K562 (cell line): ENCODE measurements at regions of chr5 and their contacts with region 1.

Region 1: GRCh38 chr5:10317825-10318682 is 10.4 kb upstream of the CMBL start:
- DNase-seq: peak in 3 of 4 experiments; percentile 20 to 81 (median 63)
- ATAC-seq: peak; percentile 30
- H3K4me3 ChIP-seq: no peak overlapping the region
- H3K27ac ChIP-seq: peak overlapping the region; percentile 77
- H3K4me1 ChIP-seq: peaks cover 33 to 35% of the 10 kb centered on the region in 2 experiments
- H3K27me3 ChIP-seq: no peaks in the 10 kb centered on the region; a peak in 1 of 5 replicates
- CTCF ChIP-seq: no peak
- EP300 ChIP-seq: peak; percentile 61; the same call in 1 of the 2 replicates
- POLR2A ChIP-seq: no peak
- RAD21 ChIP-seq: no peak

Region 2: GRCh38 chr5:10283927-10284635 is 34.0 kb before region 1 on chr5:
- CTCF ChIA-PET with region 1: no interaction called
- POLR2A ChIA-PET with region 1: interaction called, 3 read pairs
- in situ Hi-C with region 1: no loop called
- intact Hi-C with region 1: loop called (anchors 1 kb)
- DNase-seq: peak; percentile 84 to 94 (median 86)
- ATAC-seq: peak; percentile 98
- H3K4me3 ChIP-seq: no peak overlapping the region
- H3K27ac ChIP-seq: no peak overlapping the region; the same call in 2 of the 3 replicates
- H3K4me1 ChIP-seq: peaks cover 7 to 24% of the 10 kb centered on the region in 2 experiments; a peak in 4 of 5 replicates
- H3K27me3 ChIP-seq: no peaks in the 10 kb centered on the region
- CTCF ChIP-seq: peak; percentile 96 to 99 (median 97)
- EP300 ChIP-seq: no peak
- POLR2A ChIP-seq: 0 out of 2 replicates have a peak, but pooled peaks have one; percentile 35
- RAD21 ChIP-seq: peak; percentile 97 to 99

Region 3: GRCh38 chr5:10307206-10308148 is 10.6 kb before region 1 on chr5 and contains the start of gene CMBL:
- CTCF ChIA-PET with region 1: no interaction called
- POLR2A ChIA-PET with region 1: interaction called, 31 read pairs
- in situ Hi-C with region 1: no loop called
- intact Hi-C with region 1: no loop called
- DNase-seq: peak; percentile 90 to 95 (median 92)
- ATAC-seq: peak; percentile 70
- H3K4me3 ChIP-seq: peak within 1 kb of the TSS; percentile 78
- H3K27ac ChIP-seq: peak within 1 kb of the TSS; percentile 91
- H3K4me1 ChIP-seq: peaks cover 48 to 77% of the 10 kb centered on the region in 2 experiments
- H3K27me3 ChIP-seq: no peaks in the 10 kb centered on the region
- CTCF ChIP-seq: 0 out of 6 replicates have a peak, but pooled peaks of 1 of the 3 experiments have one; percentile 1
- EP300 ChIP-seq: peak; percentile 42
- POLR2A ChIP-seq: peak; percentile 86
- RAD21 ChIP-seq: peak in 1 of 2 experiments; percentile 11; a peak in 1 of 4 replicates
- polyA plus RNA-seq, gene CMBL: 53.4 to 71.1 TPM

Region 4: GRCh38 chr5:10329820-10330481 is 11.9 kb after region 1 on chr5:
- CTCF ChIA-PET with region 1: no interaction called
- POLR2A ChIA-PET with region 1: interaction called, 12 read pairs
- in situ Hi-C with region 1: no loop called
- intact Hi-C with region 1: no loop called
- DNase-seq: no peak
- ATAC-seq: no peak
- H3K4me3 ChIP-seq: no peak overlapping the region
- H3K27ac ChIP-seq: no peak overlapping the region
- H3K4me1 ChIP-seq: peaks cover 8 to 10% of the 10 kb centered on the region in 2 experiments; a peak in 3 of 5 replicates
- H3K27me3 ChIP-seq: no peaks in the 10 kb centered on the region
- CTCF ChIP-seq: no peak
- EP300 ChIP-seq: no peak
- POLR2A ChIP-seq: no peak
- RAD21 ChIP-seq: no peak

Region 5: DNA sequence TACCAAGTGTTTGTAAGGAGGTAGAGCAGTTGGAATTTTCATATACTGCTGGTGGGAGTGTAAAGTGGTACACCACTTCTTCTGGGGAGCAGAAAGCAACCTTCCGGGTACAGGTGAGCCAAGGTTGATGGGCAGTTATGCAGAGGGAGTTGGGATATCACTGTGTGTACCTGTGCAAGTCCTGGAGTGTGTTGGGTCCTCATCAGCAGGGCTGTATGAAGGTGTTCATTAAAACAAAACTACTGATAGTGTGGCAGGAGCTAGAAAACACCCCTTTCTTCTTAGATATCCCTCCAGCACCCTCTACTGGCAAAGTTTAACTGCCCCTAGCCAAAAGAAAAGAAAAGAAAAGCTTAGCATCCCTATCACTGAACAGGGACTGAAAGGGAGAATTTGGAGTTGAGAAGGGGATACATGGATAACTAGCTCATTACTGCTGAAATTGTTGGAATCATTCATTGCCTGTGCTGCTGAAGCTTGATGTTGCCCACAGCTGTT is 46.2 kb after region 1 on chr5:
- CTCF ChIA-PET with region 1: no interaction called
- POLR2A ChIA-PET with region 1: interaction called, 3 read pairs
- in situ Hi-C with region 1: no loop called
- intact Hi-C with region 1: loop called (anchors 2 kb)
- DNase-seq: peak in 3 of 4 experiments; percentile 39 to 70 (median 60)
- ATAC-seq: peak; percentile 69
- H3K4me3 ChIP-seq: no peak overlapping the region
- H3K27ac ChIP-seq: no peak overlapping the region
- H3K4me1 ChIP-seq: peaks cover 17 to 19% of the 10 kb centered on the region in 2 experiments; a peak in 4 of 5 replicates
- H3K27me3 ChIP-seq: no peaks in the 10 kb centered on the region
- CTCF ChIP-seq: peak; percentile 68 to 84 (median 78)
- EP300 ChIP-seq: no peak
- POLR2A ChIP-seq: no peak
- RAD21 ChIP-seq: peak; percentile 65 to 85

Region 6: GRCh38 chr5:10439692-10440091 is 121.6 kb after region 1 on chr5:
- CTCF ChIA-PET with region 1: no interaction called
- POLR2A ChIA-PET with region 1: no interaction called
- in situ Hi-C with region 1: no loop called
- intact Hi-C with region 1: loop called (anchors 5 kb)
- DNase-seq: peak in 2 of 4 experiments; percentile 69 to 72
- ATAC-seq: peak; percentile 41
- H3K4me3 ChIP-seq: no peak overlapping the region
- H3K27ac ChIP-seq: peak overlapping the region; percentile 57; the same call in 2 of the 3 replicates
- H3K4me1 ChIP-seq: peaks cover 26 to 38% of the 10 kb centered on the region in 2 experiments; a peak in 4 of 5 replicates
- H3K27me3 ChIP-seq: no peaks in the 10 kb centered on the region
- CTCF ChIP-seq: no peak
- EP300 ChIP-seq: peak; percentile 46; the same call in 1 of the 2 replicates
- POLR2A ChIP-seq: 0 out of 2 replicates have a peak, but pooled peaks have one; percentile 34
- RAD21 ChIP-seq: no peak

Region 7: GRCh38 chr5:10627160-10627701 is 309.2 kb after region 1 on chr5:
- CTCF ChIA-PET with region 1: no interaction called
- POLR2A ChIA-PET with region 1: no interaction called
- in situ Hi-C with region 1: no loop called
- intact Hi-C with region 1: loop called (anchors 1 kb)
- DNase-seq: peak in 2 of 4 experiments; percentile 48 to 49
- ATAC-seq: peak; percentile 40
- H3K4me3 ChIP-seq: peak overlapping the region; percentile 34; the same call in 1 of the 2 replicates
- H3K27ac ChIP-seq: no peak overlapping the region
- H3K4me1 ChIP-seq: peaks cover 3 to 17% of the 10 kb centered on the region in 2 experiments; a peak in 3 of 5 replicates
- H3K27me3 ChIP-seq: peaks cover 18 to 44% of the 10 kb centered on the region in 2 experiments
- CTCF ChIP-seq: no peak
- EP300 ChIP-seq: no peak
- POLR2A ChIP-seq: no peak
- RAD21 ChIP-seq: no peak